ENCODE measurements at regions of chr7 and their contacts with region 1.

Region 1: GRCh38 chr7:85186521-85187241 is at the start of gene SEMA3D:
- DNase-seq: peak; percentile 34
- H3K4me3 Mint-ChIP-seq: peak within 1 kb of the TSS; percentile 12
- H3K27ac Mint-ChIP-seq: no peak within 1 kb of the TSS
- H3K4me1 Mint-ChIP-seq: peaks cover 4% of the 10 kb centered on the region
- H3K27me3 Mint-ChIP-seq: peaks cover 46% of the 10 kb centered on the region
- total RNA-seq, gene SEMA3D: not detected

Region 2: GRCh38 chr7:85554236-85555178 is 367.8 kb after region 1 on chr7:
- CTCF ChIA-PET with region 1: no interaction called
- intact Hi-C with region 1: loop called (anchors 1 kb)
- DNase-seq: peak; percentile 8
- H3K4me3 Mint-ChIP-seq: no peak overlapping the region
- H3K27ac Mint-ChIP-seq: no peak overlapping the region
- H3K4me1 Mint-ChIP-seq: no peaks in the 10 kb centered on the region
- H3K27me3 Mint-ChIP-seq: no peaks in the 10 kb centered on the region